ENCODE measurements at regions of chr17 and their contacts with region 1.

Region 1: DNA sequence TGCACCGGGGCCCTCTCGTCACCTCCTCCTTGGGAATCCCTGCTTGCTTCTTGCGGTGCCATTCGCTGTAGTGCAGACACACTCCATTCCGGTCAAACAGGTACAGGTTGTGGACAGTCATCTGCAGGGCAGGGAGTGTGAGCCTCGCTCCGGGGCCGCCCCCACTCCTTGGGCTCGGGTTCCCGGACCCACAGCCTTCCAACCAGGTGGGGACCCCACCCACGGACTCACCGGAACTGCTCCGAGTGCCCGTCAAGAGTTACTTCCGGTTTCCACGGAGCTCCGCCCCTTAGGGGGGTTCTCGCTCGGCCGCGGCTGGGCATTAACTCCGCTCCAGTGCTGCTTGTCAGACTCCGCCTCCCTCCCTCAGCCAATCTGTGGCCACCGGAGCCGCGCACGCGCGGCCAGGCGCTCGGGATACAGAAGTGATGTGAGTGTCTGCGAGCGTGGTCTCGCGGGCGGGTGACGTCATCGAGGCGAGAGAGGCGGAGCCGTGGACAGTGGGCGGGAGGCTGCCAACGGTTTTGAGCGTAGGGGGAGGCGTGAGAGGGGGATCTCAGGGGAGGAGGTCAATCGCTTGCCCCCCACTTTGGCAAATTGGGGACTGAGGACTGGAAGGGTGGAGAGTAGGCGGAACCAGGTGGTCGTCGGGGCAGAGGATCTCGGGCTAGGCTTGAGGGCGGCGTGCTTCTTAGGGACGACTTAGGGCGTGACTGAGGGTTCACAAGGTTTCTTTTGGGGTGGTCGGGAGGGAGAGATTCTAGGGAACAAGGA is at the starts of genes CNTROB and TRAPPC1:
- DNase-seq: peak; percentile 100
- H3K4me3 ChIP-seq: peak within 1 kb of the TSS; percentile 68
- H3K27ac ChIP-seq: peak within 1 kb of the TSS; percentile 88
- H3K4me1 ChIP-seq: peaks cover 23% of the 10 kb centered on the region
- H3K27me3 ChIP-seq: no peaks in the 10 kb centered on the region
- CTCF ChIP-seq: no peak
- total RNA-seq, gene CNTROB: 72.3 and 79.9 TPM in 2 replicates
- total RNA-seq, gene TRAPPC1: 111 and 140 TPM in 2 replicates

Region 2: GRCh38 chr17:7856883-7857723 is 74.8 kb before region 1 on chr17 and contains the start of gene NAA38:
- CTCF ChIA-PET with region 1: interaction called, 11 read pairs
- POLR2A ChIA-PET with region 1: no interaction called
- intact Hi-C with region 1: no loop called
- DNase-seq: peak; percentile 100
- H3K4me3 ChIP-seq: peak within 1 kb of the TSS; percentile 65
- H3K27ac ChIP-seq: peak within 1 kb of the TSS; percentile 93
- H3K4me1 ChIP-seq: peaks cover 18% of the 10 kb centered on the region
- H3K27me3 ChIP-seq: no peaks in the 10 kb centered on the region
- CTCF ChIP-seq: peak; percentile 53
- total RNA-seq, gene NAA38: 64.3 and 67.7 TPM in 2 replicates

Region 3: GRCh38 chr17:7887482-7888183 is 44.3 kb before region 1 on chr17:
- CTCF ChIA-PET with region 1: no interaction called
- POLR2A ChIA-PET with region 1: no interaction called
- intact Hi-C with region 1: loop called (anchors 5 kb)
- DNase-seq: peak; percentile 99
- H3K4me3 ChIP-seq: peak overlapping the region; percentile 87
- H3K27ac ChIP-seq: peak overlapping the region; percentile 96
- H3K4me1 ChIP-seq: peaks cover 37% of the 10 kb centered on the region
- H3K27me3 ChIP-seq: no peaks in the 10 kb centered on the region
- CTCF ChIP-seq: no peak

Region 4: GRCh38 chr17:8001976-8002720 is 70.3 kb after region 1 on chr17 and contains the start of gene GUCY2D:
- CTCF ChIA-PET with region 1: no interaction called
- POLR2A ChIA-PET with region 1: no interaction called
- intact Hi-C with region 1: no loop called
- DNase-seq: no peak
- H3K4me3 ChIP-seq: peak within 1 kb of the TSS; percentile 26
- H3K27ac ChIP-seq: no peak within 1 kb of the TSS
- H3K4me1 ChIP-seq: no peaks in the 10 kb centered on the region
- H3K27me3 ChIP-seq: peaks cover 58% of the 10 kb centered on the region
- CTCF ChIP-seq: no peak
- total RNA-seq, gene GUCY2D: not detected in 2 replicates